H1 (cell line): ENCODE measurements at regions of chr11 and their contacts with region 1.

Region 1: DNA sequence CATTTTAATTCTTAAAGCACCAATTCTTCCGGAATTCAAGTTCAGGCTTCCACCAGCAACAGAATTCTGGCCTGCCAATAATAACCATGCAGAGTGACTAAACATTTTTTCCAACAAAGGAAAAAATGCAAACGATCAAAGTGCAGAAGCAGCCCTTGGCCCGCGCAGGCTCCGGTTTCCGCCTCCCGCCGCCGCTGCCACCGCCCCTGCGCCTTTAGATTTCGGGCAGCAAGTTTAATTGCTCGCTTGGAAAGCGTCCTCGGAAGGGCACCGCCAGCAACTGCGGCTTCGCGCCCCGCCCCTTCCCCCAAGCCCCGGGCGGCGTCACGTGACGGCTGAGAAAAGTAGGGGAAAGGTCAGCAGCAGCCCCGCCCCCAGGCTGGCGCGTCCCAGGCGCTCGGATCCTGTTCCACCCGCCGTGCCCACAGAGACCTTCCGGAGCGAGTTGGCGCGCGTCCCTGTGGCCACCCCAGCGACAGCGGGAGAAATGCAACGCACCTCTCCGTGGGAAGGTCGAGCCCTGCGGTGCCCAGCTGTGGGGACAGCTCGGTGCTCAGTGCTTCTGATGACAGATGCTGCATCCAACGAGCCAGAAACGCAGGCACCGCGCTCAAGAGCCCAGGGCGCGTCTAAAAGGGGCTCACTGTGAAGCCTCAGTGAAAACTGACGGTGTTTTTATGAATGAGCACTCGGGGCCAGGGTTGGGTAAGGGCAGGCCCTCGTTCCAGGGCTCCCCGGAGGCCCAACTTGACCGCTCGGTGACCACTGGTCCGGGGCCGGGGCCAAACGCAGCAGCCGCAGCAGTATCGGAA is 2.5 kb downstream of the CPT1A start:
- DNase-seq: peak; percentile 75 to 97
- H3K4me3 ChIP-seq: peak overlapping the region; percentile 32 to 69 (median 56)
- H3K27ac ChIP-seq: no peak overlapping the region
- H3K4me1 ChIP-seq: peaks cover 3 to 12% (median 7%) of the 10 kb centered on the region in 4 experiments; a peak in 6 of 7 replicates
- H3K27me3 ChIP-seq: peaks cover 22 to 50% (median 39%) of the 10 kb centered on the region in 4 experiments
- CTCF ChIP-seq: no peak
- EP300 ChIP-seq: no peak
- POLR2A ChIP-seq: no peak
- RAD21 ChIP-seq: peak in 1 of 2 experiments; percentile 15; a peak in 1 of 4 replicates

Region 2: DNA sequence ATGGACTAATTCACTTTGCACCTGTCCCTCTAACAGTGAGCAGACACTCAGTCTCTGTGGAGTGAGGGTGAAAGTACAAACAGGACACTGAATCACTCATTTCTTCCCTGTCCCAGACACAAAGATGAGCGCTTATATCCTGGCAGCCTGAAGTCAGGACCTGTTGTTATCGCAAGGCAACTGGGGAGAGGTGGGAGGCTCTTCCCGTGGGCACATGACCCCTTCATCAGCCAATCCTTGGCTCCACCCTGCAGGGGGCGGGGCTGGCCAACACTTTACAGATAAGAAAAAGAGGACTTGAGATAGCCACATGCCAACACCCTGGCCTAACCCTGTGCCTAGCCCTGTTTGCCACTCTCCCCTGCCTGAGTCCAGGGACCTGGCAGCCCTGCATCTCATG is 58.4 kb before region 1 on chr11:
- CTCF ChIA-PET with region 1: no interaction called
- POLR2A ChIA-PET with region 1: no interaction called
- DNase-seq: peak; percentile 31 to 89
- H3K4me3 ChIP-seq: no peak overlapping the region
- H3K27ac ChIP-seq: no peak overlapping the region
- H3K4me1 ChIP-seq: peaks cover 0 to 4% (median 0%) of the 10 kb centered on the region in 4 experiments; a peak in 2 of 7 replicates
- H3K27me3 ChIP-seq: no peaks in the 10 kb centered on the region
- CTCF ChIP-seq: no peak
- EP300 ChIP-seq: no peak
- POLR2A ChIP-seq: 0 out of 3 replicates have a peak, but pooled peaks of 1 of the 2 experiments have one; percentile 31
- RAD21 ChIP-seq: no peak

Region 3: DNA sequence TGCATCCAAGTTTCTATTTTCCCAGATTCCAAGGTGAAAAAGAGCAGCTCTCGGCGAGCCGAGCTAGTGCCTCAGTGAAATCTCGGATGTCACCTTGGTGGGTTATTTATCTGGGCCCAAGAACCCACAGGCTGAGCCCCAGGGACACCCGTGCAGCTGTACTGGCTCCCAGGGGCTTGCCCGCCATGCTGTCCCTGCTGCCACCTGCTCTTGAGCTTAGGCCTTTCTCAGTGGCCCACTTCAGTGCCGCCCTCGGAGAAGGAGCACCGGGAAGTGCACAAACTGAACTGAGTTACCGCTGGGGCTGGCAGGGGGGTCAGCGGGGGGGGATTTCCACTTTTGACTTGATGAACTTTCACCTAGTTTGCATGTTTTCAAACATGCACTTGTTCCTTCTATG is 25.5 kb before region 1 on chr11:
- CTCF ChIA-PET with region 1: no interaction called
- POLR2A ChIA-PET with region 1: no interaction called
- DNase-seq: no peak
- H3K4me3 ChIP-seq: no peak overlapping the region
- H3K27ac ChIP-seq: no peak overlapping the region
- H3K4me1 ChIP-seq: peaks cover 0 to 2% (median 0%) of the 10 kb centered on the region in 4 experiments; a peak in 2 of 7 replicates
- H3K27me3 ChIP-seq: no peaks in the 10 kb centered on the region
- CTCF ChIP-seq: no peak
- EP300 ChIP-seq: no peak
- POLR2A ChIP-seq: no peak
- RAD21 ChIP-seq: no peak

Region 4: GRCh38 chr11:68825571-68825970 is 13.7 kb before region 1 on chr11:
- CTCF ChIA-PET with region 1: interaction called, 4 read pairs
- POLR2A ChIA-PET with region 1: interaction called, 11 read pairs
- DNase-seq: peak in 1 of 2 experiments; percentile 54
- H3K4me3 ChIP-seq: no peak overlapping the region
- H3K27ac ChIP-seq: no peak overlapping the region
- H3K4me1 ChIP-seq: peaks cover 3 to 6% (median 5%) of the 10 kb centered on the region in 4 experiments
- H3K27me3 ChIP-seq: no peaks in the 10 kb centered on the region
- CTCF ChIP-seq: peak; percentile 48 to 59 (median 54)
- EP300 ChIP-seq: no peak
- POLR2A ChIP-seq: no peak
- RAD21 ChIP-seq: peak; percentile 56 to 63

Region 5: GRCh38 chr11:68855205-68855981 is 16.1 kb after region 1 on chr11:
- CTCF ChIA-PET with region 1: interaction called, 11 read pairs
- POLR2A ChIA-PET with region 1: interaction called, 10 read pairs
- DNase-seq: peak in 1 of 2 experiments; percentile 70
- H3K4me3 ChIP-seq: peak overlapping the region; percentile 59 to 84 (median 70)
- H3K27ac ChIP-seq: no peak overlapping the region
- H3K4me1 ChIP-seq: peaks cover 0 to 6% (median 1%) of the 10 kb centered on the region in 4 experiments; a peak in 3 of 7 replicates
- H3K27me3 ChIP-seq: peaks cover 5 to 27% (median 14%) of the 10 kb centered on the region in 4 experiments; a peak in 6 of 7 replicates
- CTCF ChIP-seq: no peak
- EP300 ChIP-seq: no peak
- POLR2A ChIP-seq: no peak
- RAD21 ChIP-seq: no peak

Region 6: DNA sequence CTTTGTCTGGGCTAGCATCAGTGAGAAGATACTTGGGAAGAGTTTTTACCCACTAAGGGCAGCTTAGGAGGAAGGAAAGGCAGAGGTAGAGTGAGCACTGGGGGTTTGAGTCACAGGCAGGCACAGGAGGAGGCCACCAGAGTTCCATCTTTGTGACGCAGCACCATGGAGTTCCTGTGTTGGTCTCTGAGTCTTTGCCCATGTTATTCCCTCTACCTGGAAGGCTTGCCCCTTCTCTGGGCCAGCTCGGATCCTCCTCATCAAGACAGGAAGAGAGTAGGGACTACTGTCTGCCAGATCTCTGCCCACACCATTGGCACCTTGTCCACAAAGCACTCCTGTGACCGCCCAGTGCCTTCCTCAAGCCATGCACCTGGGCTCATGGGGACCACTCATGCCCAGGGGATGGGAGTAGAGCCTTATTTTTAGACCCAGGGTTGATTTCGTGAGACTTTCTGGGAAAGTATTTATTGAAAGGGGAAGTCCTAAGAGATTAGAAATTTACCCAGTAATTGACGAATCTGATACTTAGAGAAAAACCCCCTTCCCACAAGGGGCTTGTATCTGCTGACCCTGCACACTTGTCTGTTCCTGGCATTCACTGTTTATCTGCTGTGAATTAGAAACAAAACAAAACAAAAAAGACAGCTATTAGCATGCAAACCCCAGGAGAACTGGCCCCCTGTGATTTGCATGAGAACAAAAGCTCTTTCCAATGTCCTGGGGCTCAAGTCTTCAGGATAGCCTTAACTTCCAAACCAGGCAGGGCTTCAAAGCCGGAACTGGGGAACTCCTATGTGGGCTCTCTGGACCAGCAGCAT is 418.8 kb after region 1 on chr11:
- CTCF ChIA-PET with region 1: no interaction called
- POLR2A ChIA-PET with region 1: no interaction called
- DNase-seq: peak in 1 of 2 experiments; percentile 13
- H3K4me3 ChIP-seq: peak overlapping the region in 1 of 4 experiments; percentile 10; a peak in 1 of 8 replicates
- H3K27ac ChIP-seq: no peak overlapping the region
- H3K4me1 ChIP-seq: peaks cover 4 to 8% (median 6%) of the 10 kb centered on the region in 4 experiments; a peak in 6 of 7 replicates
- H3K27me3 ChIP-seq: peaks cover 0 to 5% (median under 1%) of the 10 kb centered on the region in 4 experiments; a peak in 2 of 7 replicates
- CTCF ChIP-seq: no peak
- EP300 ChIP-seq: no peak
- POLR2A ChIP-seq: no peak
- RAD21 ChIP-seq: no peak